ENCODE measurements at regions of chr15 and their contacts with region 1.

Region 1: GRCh38 chr15:40743921-40744814 is 10.9 kb downstream of the RMDN3 start:
- DNase-seq: peak; percentile 70
- H3K4me3 Mint-ChIP-seq: peak overlapping the region; percentile 60
- H3K27ac Mint-ChIP-seq: peak overlapping the region; percentile 95
- H3K4me1 Mint-ChIP-seq: peaks cover 43% of the 10 kb centered on the region
- H3K27me3 Mint-ChIP-seq: no peaks in the 10 kb centered on the region

Region 2: DNA sequence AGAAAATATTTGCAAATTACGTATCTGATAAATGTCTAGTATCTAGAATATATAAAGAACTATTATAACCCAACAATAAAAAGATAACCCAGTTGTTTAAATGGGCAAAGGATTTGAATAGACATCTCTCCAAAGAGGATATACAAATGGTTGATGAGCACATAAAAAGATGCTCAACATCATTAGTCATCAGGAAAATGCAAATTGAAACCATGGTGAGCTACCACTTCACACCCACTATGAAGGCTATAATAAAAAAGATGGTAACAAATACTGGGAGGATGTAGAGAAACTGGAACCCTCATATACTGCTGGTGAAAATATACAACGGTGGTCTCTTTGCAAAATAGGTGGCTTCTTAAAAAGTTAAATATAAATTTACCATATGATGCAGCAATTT is 21.2 kb before region 1 on chr15:
- intact Hi-C with region 1: loop called (anchors 1 kb)
- DNase-seq: no peak
- H3K4me3 Mint-ChIP-seq: no peak overlapping the region
- H3K27ac Mint-ChIP-seq: no peak overlapping the region
- H3K4me1 Mint-ChIP-seq: peaks cover 24% of the 10 kb centered on the region
- H3K27me3 Mint-ChIP-seq: no peaks in the 10 kb centered on the region

Region 3: DNA sequence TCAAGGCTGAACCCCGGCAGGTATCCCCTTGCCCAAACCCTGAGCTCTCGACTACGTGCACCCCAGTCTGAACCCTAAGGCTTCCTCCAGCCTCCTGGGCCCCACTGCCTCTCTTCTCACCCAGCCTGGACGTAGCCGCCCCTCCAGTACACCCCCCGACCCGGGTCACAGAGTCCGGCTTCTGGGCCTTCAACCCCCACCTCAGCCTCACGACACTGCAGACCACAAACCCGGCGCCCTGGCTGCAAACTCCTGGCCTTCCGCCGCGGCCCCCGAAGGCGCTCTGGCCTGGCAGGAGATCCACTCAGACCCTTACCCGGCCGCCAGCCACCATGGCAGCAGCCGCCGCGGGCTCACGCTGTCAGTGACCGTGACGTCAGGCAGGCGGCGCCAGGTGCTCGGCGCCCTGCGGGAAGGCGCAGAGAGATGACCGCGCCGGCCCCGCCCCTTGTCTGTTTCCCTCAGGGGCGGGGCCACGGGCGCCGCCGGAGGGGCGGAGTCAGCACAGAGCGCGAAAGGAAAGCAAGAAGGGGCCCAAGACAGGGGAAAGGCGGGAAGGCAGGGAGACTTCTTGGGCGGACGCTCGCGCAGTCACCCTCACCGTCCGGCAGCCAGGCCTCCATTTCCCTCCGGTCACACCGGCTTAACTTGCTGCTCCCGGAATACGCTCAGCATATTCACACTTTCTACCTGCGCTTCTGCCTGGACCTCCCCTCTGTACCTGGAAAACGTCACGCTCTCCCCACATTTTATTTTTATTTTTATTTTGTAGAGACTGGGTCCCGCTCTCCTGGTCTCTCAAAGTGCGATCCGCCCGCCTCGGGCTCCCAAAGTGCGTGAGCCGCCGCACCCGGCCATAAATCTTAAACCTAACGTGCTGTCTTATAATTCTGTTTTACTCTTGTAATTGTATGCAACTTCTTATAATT is 11.0 kb after region 1 on chr15 and contains the start of gene RMDN3:
- intact Hi-C with region 1: loop called (anchors 1 kb)
- DNase-seq: peak; percentile 94
- H3K4me3 Mint-ChIP-seq: peak within 1 kb of the TSS; percentile 91
- H3K27ac Mint-ChIP-seq: peak within 1 kb of the TSS; percentile 97
- H3K4me1 Mint-ChIP-seq: peaks cover 38% of the 10 kb centered on the region
- H3K27me3 Mint-ChIP-seq: no peaks in the 10 kb centered on the region
- total RNA-seq, gene RMDN3: 39.0 and 42.2 TPM in 2 replicates

Region 4: GRCh38 chr15:40763801-40764732 is 19.9 kb after region 1 on chr15 and contains the start of gene GCHFR:
- intact Hi-C with region 1: loop called (anchors 1 kb)
- DNase-seq: peak; percentile 73
- H3K4me3 Mint-ChIP-seq: peak within 1 kb of the TSS; percentile 81
- H3K27ac Mint-ChIP-seq: peak within 1 kb of the TSS; percentile 87
- H3K4me1 Mint-ChIP-seq: peaks cover 21% of the 10 kb centered on the region
- H3K27me3 Mint-ChIP-seq: peaks cover 2% of the 10 kb centered on the region
- total RNA-seq, gene GCHFR: 31.3 and 35.7 TPM in 2 replicates